ENCODE measurements at regions of chr13 and their contacts with region 1.

Region 1: GRCh38 chr13:49792550-49793324 is at the start of gene KPNA3:
- DNase-seq: peak; percentile 88
- ATAC-seq: peak; percentile 89
- H3K4me3 Mint-ChIP-seq: peak within 1 kb of the TSS; percentile 97
- H3K27ac Mint-ChIP-seq: peak within 1 kb of the TSS; percentile 97
- H3K4me1 Mint-ChIP-seq: peaks cover 31% of the 10 kb centered on the region
- H3K27me3 Mint-ChIP-seq: no peaks in the 10 kb centered on the region
- CTCF ChIP-seq: no peak
- total RNA-seq, gene KPNA3: 28.6 and 28.7 TPM in 2 replicates

Region 2: GRCh38 chr13:49247643-49248621 is 544.8 kb before region 1 on chr13 and contains the start of gene CDADC1:
- CTCF ChIA-PET with region 1: no interaction called
- POLR2A ChIA-PET with region 1: interaction called, 8 read pairs
- intact Hi-C with region 1: loop called (anchors 5 kb)
- DNase-seq: peak; percentile 89
- ATAC-seq: peak; percentile 95
- H3K4me3 Mint-ChIP-seq: peak within 1 kb of the TSS; percentile 99
- H3K27ac Mint-ChIP-seq: peak within 1 kb of the TSS; percentile 94
- H3K4me1 Mint-ChIP-seq: peaks cover 22% of the 10 kb centered on the region
- H3K27me3 Mint-ChIP-seq: no peaks in the 10 kb centered on the region
- CTCF ChIP-seq: no peak
- total RNA-seq, gene CDADC1: 7.4 and 10.4 TPM in 2 replicates

Region 3: DNA sequence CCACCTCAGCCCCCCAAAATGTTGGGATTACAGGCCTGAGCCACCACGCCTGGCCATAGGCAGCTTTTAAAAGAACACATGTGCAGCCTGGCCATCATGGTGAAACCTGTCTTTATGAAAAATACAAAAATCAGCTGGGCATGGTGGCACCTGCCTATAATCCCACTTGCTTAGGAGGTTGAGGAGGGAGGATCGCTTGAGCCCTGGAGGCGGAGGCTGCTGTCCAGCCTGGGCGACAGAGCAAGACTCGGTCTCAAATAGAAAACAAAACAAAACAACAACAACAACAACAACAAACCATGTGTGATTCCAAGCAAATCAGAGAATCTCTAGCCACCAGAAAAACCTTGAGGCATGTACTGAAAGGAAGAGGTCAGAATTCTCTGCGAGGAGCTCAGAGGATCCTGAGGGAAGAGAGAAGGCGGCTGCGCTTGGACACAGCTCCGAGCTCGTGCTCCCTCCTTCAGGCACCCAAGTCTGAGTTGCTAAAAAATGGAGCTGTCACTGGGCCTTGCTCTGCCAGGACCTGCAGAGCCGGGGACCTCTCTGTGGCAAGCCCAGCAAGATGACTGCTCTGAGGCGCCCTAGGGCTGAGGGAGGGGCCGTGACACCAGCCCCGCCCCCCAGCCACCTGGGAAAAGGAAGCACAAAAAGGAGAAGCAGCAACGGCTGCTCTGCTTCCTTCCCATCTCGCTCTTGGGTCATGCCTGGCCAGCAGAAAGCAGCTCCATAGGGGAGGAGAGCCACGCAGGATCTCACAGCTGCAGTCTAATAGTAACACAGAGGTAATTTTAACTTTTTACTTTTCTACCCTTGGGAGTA is 164.7 kb before region 1 on chr13 and contains the start of gene ARL11:
- CTCF ChIA-PET with region 1: no interaction called
- POLR2A ChIA-PET with region 1: interaction called, 5 read pairs
- intact Hi-C with region 1: loop called (anchors 5 kb)
- DNase-seq: peak; percentile 78
- ATAC-seq: peak; percentile 98
- H3K4me3 Mint-ChIP-seq: peak within 1 kb of the TSS; percentile 99
- H3K27ac Mint-ChIP-seq: peak within 1 kb of the TSS; percentile 98
- H3K4me1 Mint-ChIP-seq: peaks cover 37% of the 10 kb centered on the region
- H3K27me3 Mint-ChIP-seq: no peaks in the 10 kb centered on the region
- CTCF ChIP-seq: no peak
- total RNA-seq, gene ARL11: 9.5 and 10.7 TPM in 2 replicates

Region 4: DNA sequence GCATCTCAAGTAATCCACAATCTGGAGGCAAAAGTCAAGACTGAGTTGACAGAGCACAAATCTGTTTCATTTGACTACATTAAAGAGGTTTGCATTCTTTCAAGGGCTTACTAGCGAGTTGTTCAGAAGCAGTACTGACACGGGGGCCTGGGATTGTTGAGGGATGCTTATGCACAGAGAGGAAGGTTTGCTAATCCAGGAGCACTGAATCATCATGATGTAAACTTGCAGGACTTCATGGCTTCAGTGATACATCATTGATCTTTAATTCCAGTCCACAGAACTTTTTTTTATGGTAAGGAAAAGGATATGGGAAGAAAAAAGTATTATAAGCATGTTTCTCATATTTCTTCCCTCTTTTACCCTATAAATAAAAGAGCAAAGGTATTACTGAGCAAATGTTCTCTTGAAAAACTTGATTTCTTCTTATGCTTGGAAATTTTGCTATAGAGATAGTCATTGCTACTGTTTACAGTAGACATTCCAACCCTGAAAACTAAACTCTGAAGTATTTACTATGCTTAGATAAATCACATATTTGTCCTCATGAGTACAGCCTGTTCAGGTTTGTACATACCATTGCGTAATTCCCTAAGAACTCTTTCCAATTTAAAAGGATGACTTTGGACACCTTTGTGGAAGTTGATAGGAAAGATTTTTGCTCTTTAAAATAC is 65.6 kb after region 1 on chr13:
- CTCF ChIA-PET with region 1: no interaction called
- POLR2A ChIA-PET with region 1: interaction called, 12 read pairs
- intact Hi-C with region 1: no loop called
- DNase-seq: no peak
- ATAC-seq: no peak
- H3K4me3 Mint-ChIP-seq: no peak overlapping the region
- H3K27ac Mint-ChIP-seq: no peak overlapping the region
- H3K4me1 Mint-ChIP-seq: no peaks in the 10 kb centered on the region
- H3K27me3 Mint-ChIP-seq: peaks cover 10% of the 10 kb centered on the region
- CTCF ChIP-seq: no peak

Region 5: DNA sequence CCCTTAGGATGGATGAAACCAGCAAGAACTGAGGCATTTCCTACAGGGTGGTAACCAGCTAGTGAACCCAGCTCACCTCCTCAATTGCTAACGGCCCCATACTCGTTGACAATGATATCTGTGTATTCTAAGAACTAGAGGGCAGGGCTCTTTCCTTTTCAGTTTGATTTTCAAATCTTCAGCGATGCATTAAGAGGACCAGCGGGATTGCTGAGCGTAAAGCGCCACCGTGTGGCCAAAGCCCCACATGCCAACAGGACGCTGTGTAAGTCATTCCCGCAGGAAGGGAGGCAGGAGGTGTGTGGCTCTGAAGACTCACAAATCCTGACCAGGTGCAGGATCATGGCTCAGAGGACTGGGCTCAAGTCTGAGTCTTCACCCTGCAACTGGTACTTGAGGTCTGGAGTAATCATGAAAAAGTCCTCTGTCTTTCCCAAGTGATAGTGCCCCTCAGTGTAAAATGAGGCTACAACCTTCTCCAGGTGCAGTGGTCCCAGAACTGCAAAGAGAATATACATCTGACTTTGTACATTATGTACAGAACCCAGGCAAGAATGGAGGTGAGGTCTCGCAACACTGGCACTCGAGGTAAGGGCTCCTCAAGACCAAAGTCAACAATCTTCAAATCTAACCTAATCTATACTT is 1277.4 kb after region 1 on chr13:
- CTCF ChIA-PET with region 1: no interaction called
- POLR2A ChIA-PET with region 1: interaction called, 3 read pairs
- intact Hi-C with region 1: loop called (anchors 2 kb)
- DNase-seq: peak; percentile 68
- ATAC-seq: peak; percentile 92
- H3K4me3 Mint-ChIP-seq: no peak overlapping the region
- H3K27ac Mint-ChIP-seq: no peak overlapping the region
- H3K4me1 Mint-ChIP-seq: peaks cover 7% of the 10 kb centered on the region
- H3K27me3 Mint-ChIP-seq: peaks cover 28% of the 10 kb centered on the region
- CTCF ChIP-seq: peak; percentile 96

Measured in activated B cell treated with CpG ODN at 0.5 μM for 24 hours (primary cell).